ENCODE measurements at regions of chr2 and their contacts with region 1.

Region 1: DNA sequence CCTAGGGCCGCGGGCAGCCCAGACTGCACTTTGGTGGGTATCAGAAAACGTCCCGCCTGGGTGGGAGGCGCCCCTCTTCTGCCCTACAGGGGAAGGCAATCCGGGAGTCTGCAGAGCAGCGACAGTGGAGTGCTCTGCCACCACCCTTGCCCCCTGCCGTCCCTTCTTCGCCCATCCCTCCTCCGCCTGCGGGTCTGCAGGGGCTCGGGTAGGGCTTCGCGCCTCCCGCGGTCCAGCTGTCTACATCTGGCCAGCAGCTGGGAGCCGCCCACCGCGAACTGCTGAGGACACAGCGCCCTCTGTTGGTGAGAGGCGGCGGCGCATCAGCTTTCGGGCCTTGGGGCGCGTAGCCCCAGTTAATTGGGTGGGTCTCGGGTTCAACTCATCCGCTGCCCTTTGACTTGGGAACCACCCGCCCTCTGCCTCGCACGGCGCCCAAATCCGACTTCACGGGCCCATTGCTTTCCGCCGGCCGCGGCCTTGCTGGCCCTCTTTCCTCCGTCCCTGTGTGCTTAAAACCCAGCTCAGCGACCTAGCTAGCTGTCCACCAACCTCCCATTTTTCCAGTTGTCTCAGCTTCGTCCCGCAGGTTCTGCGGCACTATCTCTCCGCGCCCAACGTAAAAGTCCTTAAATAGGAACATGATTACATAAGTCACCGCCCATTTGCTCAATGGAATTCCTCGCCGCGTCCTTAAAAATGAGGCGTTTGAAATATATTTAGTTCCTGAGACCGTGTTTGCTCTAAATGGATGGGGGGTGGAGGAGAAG is 17.6 kb downstream of the WNT10A start:
- DNase-seq: peak; percentile 82
- H3K4me3 Mint-ChIP-seq: peak overlapping the region; percentile 44
- H3K27ac Mint-ChIP-seq: no peak overlapping the region
- H3K4me1 Mint-ChIP-seq: peaks cover 40% of the 10 kb centered on the region
- H3K27me3 Mint-ChIP-seq: peaks cover 92% of the 10 kb centered on the region

Region 2: GRCh38 chr2:218861645-218862318 is 36.5 kb before region 1 on chr2:
- CTCF ChIA-PET with region 1: interaction called, 18 read pairs
- DNase-seq: no peak
- H3K4me3 Mint-ChIP-seq: no peak overlapping the region
- H3K27ac Mint-ChIP-seq: no peak overlapping the region
- H3K4me1 Mint-ChIP-seq: peaks cover 12% of the 10 kb centered on the region
- H3K27me3 Mint-ChIP-seq: peaks cover 95% of the 10 kb centered on the region

Region 3: GRCh38 chr2:218876562-218877219 is 21.6 kb before region 1 on chr2:
- CTCF ChIA-PET with region 1: interaction called, 443 read pairs
- DNase-seq: peak; percentile 78
- H3K4me3 Mint-ChIP-seq: no peak overlapping the region
- H3K27ac Mint-ChIP-seq: no peak overlapping the region
- H3K4me1 Mint-ChIP-seq: peaks cover 22% of the 10 kb centered on the region
- H3K27me3 Mint-ChIP-seq: peaks cover 98% of the 10 kb centered on the region

Region 4: DNA sequence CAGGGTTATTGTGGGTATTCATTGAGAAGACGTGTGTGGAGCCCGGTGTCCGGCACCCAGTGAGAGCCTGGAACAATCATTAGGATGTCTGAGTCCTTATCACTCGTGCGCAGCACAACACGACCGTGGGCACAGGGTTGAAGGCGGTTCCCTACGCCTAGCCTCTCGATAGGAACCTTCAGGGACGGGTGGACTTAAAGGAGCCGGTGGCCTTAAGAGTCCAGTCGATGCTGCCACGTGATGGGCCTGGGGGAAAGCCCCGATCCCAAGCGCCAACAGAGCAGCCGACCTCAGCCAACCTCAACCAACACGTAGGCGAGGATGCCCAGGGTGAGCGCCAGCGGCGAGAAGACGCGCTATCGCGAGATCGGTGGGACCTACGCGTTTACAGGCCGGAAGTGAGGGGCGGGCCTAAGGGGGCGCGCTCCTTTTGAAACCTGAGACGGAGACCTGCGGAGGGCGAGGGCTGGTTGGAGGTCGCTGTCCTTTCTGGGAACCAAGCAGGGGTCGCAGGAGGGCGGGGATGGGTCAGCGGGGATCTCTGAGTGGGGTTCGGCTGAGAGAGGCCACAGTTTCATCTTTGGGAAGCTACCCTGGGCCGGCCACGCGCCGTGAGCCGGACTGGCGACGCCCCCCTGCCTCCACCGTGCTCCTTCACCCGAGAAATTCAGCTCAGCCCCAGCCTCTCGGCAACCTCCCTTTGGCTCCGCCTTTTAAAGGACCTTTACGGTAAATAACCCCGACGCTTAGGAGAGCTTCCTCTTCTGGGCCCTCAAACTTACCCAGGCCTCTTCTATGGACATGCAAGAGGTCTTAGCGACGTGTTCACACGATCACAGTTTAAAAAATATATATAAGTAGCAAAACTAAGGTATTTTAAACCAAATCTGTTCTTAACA is 10.7 kb after region 1 on chr2:
- CTCF ChIA-PET with region 1: interaction called, 36 read pairs
- DNase-seq: peak; percentile 90
- H3K4me3 Mint-ChIP-seq: peak overlapping the region; percentile 78
- H3K27ac Mint-ChIP-seq: peak overlapping the region; percentile 61
- H3K4me1 Mint-ChIP-seq: peaks cover 16% of the 10 kb centered on the region
- H3K27me3 Mint-ChIP-seq: peaks cover 58% of the 10 kb centered on the region

Region 5: GRCh38 chr2:219024059-219024458 is 125.8 kb after region 1 on chr2:
- CTCF ChIA-PET with region 1: no interaction called
- DNase-seq: no peak
- H3K4me3 Mint-ChIP-seq: no peak overlapping the region
- H3K27ac Mint-ChIP-seq: no peak overlapping the region
- H3K4me1 Mint-ChIP-seq: no peaks in the 10 kb centered on the region
- H3K27me3 Mint-ChIP-seq: peaks cover 18% of the 10 kb centered on the region

Measured in activated naive CD4-positive, alpha-beta T cell treated with anti-CD3 and anti-CD28 coated beads, Interleukin-2, amount 10 ng/mL, durations not matched to agents 7 days and 5 days (primary cell).